H1 (cell line): ENCODE measurements at regions of chrX and their contacts with region 1.

Region 1: DNA sequence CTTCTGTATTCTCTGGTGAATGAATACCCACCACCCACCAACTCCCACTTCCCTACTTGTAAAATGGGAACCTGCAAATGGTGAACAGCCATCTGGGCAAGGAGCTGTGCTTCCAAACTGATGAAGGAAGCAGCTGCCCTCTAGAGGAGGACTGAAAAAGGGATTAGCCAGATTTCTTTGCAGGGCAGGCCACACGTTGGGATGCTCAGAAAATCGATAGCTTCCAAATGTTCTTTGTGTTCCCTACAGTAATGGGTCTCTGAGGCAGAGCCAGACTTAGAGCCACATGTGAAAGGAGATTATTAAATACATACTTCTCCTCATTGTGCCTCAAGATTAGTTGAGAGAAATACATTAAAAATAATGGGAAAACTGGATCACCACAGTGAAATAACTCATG is 39.3 kb upstream of the LPAR4 start:
- DNase-seq: peak; percentile 5 to 41
- H3K4me3 ChIP-seq: no peak overlapping the region
- H3K27ac ChIP-seq: no peak overlapping the region
- H3K4me1 ChIP-seq: no peaks in the 10 kb centered on the region; a peak in 1 of 7 replicates
- H3K27me3 ChIP-seq: no peaks in the 10 kb centered on the region
- CTCF ChIP-seq: peak; percentile 31 to 58 (median 39)
- EP300 ChIP-seq: no peak
- POLR2A ChIP-seq: no peak
- RAD21 ChIP-seq: peak; percentile 56 to 69

Region 2: GRCh38 chrX:78595901-78596502 is 112.3 kb before region 1 on chrX:
- CTCF ChIA-PET with region 1: interaction called, 13 read pairs
- POLR2A ChIA-PET with region 1: no interaction called
- DNase-seq: peak; percentile 0 to 47
- H3K4me3 ChIP-seq: no peak overlapping the region
- H3K27ac ChIP-seq: no peak overlapping the region
- H3K4me1 ChIP-seq: no peaks in the 10 kb centered on the region
- H3K27me3 ChIP-seq: no peaks in the 10 kb centered on the region
- CTCF ChIP-seq: peak in 2 of 3 experiments; percentile 34 to 46; a peak in 3 of 4 replicates
- EP300 ChIP-seq: no peak
- POLR2A ChIP-seq: no peak
- RAD21 ChIP-seq: peak; percentile 64 to 78

Region 3: GRCh38 chrX:78725287-78725686 is 17.0 kb after region 1 on chrX:
- CTCF ChIA-PET with region 1: no interaction called
- POLR2A ChIA-PET with region 1: no interaction called
- DNase-seq: no peak
- H3K4me3 ChIP-seq: no peak overlapping the region
- H3K27ac ChIP-seq: no peak overlapping the region
- H3K4me1 ChIP-seq: no peaks in the 10 kb centered on the region
- H3K27me3 ChIP-seq: no peaks in the 10 kb centered on the region
- CTCF ChIP-seq: no peak
- EP300 ChIP-seq: no peak
- POLR2A ChIP-seq: no peak
- RAD21 ChIP-seq: no peak

Region 4: GRCh38 chrX:78838711-78839110 is 130.4 kb after region 1 on chrX:
- CTCF ChIA-PET with region 1: no interaction called
- POLR2A ChIA-PET with region 1: no interaction called
- DNase-seq: no peak
- H3K4me3 ChIP-seq: no peak overlapping the region
- H3K27ac ChIP-seq: no peak overlapping the region
- H3K4me1 ChIP-seq: no peaks in the 10 kb centered on the region
- H3K27me3 ChIP-seq: no peaks in the 10 kb centered on the region
- CTCF ChIP-seq: no peak
- EP300 ChIP-seq: no peak
- POLR2A ChIP-seq: no peak
- RAD21 ChIP-seq: no peak